Right cardiac atrium (tissue), 5 donors: ENCODE measurements at regions of chr18 and their contacts with region 1.

Region 1: GRCh38 chr18:31356025-31356424 is 20.6 kb upstream of the DSG4 start:
- DNase-seq: no peak
- ATAC-seq: no peak
- H3K4me3 ChIP-seq: no peak overlapping the region
- H3K27ac ChIP-seq: no peak overlapping the region
- H3K4me1 ChIP-seq: no peaks in the 10 kb centered on the region
- H3K27me3 ChIP-seq: no peaks in the 10 kb centered on the region

Region 2: DNA sequence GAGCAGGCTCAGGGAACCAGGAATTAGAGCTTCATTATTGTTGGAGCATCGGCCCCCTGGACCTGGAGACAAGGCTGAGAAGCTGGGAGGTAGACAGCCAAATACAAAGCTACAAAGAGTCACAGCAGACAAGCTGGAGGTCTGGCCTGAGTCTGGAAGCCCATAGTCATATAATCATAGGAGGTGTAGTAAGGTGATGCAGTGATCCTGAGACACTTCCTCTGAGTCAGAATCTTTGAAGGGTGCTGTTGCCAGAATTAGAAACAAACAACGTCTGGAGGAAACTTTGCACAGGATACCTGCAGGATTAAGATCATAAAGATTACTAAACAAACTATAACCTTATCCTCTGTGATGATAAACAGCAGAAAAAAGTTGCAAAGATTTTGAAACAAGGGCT is 527.3 kb before region 1 on chr18:
- intact Hi-C with region 1: no loop called
- DNase-seq: no peak
- ATAC-seq: no peak
- H3K4me3 ChIP-seq: no peak overlapping the region
- H3K27ac ChIP-seq: no peak overlapping the region
- H3K4me1 ChIP-seq: no peaks in the 10 kb centered on the region
- H3K27me3 ChIP-seq: no peaks in the 10 kb centered on the region

Region 3: GRCh38 chr18:31105733-31106132 is 250.3 kb before region 1 on chr18:
- intact Hi-C with region 1: loop called in 1 of 4 experiments (anchors 5 kb)
- DNase-seq: no peak
- ATAC-seq: no peak
- H3K4me3 ChIP-seq: no peak overlapping the region
- H3K27ac ChIP-seq: no peak overlapping the region
- H3K4me1 ChIP-seq: peaks cover 2% of the 10 kb centered on the region
- H3K27me3 ChIP-seq: no peaks in the 10 kb centered on the region